Activated CD4-positive, alpha-beta memory T cell treated with anti-CD3 and anti-CD28 coated beads for 36 hours (primary cell): ENCODE measurements at regions of chr15 and their contacts with region 1.

Region 1: DNA sequence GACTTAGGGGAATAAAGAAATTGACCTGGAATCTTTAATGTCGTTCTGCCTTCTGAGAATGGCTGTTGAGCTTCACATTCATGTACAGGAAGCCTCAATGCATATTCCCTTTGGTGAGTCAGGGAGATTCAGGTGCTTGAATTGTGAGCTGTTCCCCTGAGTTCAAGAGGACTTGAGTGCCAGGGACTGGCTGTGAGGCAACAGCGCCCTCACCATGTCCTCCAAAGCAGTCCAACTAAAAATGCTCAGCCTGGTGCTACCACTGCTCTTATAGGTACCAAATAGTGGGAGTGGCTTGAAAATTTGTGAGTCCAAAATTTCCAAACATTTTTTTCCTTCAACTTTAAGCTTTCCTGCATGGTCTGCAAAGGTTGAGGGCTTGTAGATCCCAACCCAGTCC is 54.1 kb downstream of the LEO1 start:
- DNase-seq: peak; percentile 25
- H3K4me3 Mint-ChIP-seq: no peak overlapping the region
- H3K27ac Mint-ChIP-seq: no peak overlapping the region
- H3K4me1 Mint-ChIP-seq: no peaks in the 10 kb centered on the region
- H3K27me3 Mint-ChIP-seq: no peaks in the 10 kb centered on the region

Region 2: GRCh38 chr15:51793521-51794305 is 123.8 kb before region 1 on chr15:
- CTCF ChIA-PET with region 1: no interaction called
- POLR2A ChIA-PET with region 1: no interaction called
- intact Hi-C with region 1: loop called (anchors 10 kb)
- DNase-seq: no peak
- H3K4me3 Mint-ChIP-seq: no peak overlapping the region
- H3K27ac Mint-ChIP-seq: no peak overlapping the region
- H3K4me1 Mint-ChIP-seq: no peaks in the 10 kb centered on the region
- H3K27me3 Mint-ChIP-seq: no peaks in the 10 kb centered on the region

Region 3: DNA sequence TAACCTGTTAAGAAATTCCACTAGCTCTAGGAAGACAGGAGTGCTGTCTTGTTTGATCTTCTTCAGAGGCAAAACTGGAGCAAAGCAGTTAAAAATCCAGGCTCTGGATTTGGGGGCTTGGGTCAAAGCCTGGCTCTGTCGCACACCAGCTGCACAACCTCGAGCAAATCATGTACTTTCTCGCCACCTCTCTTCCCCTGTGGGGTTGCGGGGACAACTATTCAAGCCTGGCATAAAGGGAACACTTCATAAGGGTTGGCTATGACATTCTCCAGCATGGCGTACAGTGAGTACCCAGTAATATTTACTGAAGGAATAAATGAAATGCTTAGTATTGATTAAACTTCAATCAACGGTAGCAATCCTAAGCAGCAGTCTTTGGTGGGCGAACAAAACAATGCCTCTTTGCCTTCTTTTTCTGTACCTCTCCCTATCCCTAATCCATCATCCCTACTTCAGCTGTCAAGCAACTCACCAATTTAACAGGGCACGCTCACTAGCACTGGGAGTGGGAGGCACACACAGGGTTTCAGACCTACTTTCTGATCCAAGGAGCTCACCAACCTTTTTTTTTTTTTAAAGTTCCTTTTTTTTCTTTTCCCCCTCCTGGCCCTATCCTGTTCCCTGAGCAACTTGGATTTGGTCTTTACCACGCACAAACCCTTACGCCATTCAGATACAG is 240.7 kb after region 1 on chr15:
- CTCF ChIA-PET with region 1: no interaction called
- POLR2A ChIA-PET with region 1: no interaction called
- intact Hi-C with region 1: no loop called
- DNase-seq: no peak
- H3K4me3 Mint-ChIP-seq: no peak overlapping the region
- H3K27ac Mint-ChIP-seq: no peak overlapping the region
- H3K4me1 Mint-ChIP-seq: no peaks in the 10 kb centered on the region
- H3K27me3 Mint-ChIP-seq: no peaks in the 10 kb centered on the region

Region 4: DNA sequence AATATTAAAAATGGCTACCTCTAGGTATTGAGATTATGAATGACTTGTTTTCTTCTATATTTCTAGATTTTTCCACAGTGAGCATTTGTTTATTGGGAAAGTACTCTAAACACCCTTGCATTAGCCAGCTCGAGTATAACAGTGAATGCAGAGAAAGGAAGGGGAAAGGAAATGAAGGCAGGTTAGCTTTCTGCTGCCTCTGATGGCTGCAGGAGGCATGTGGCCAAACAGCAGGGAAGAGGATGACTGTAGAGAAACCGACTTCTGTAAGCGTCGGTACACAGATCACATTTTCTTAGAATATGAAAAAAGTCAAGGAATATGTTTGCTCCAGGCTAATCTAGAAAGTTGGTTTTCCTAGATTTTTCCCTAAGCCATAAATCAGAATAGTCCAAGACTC is 253.9 kb after region 1 on chr15:
- CTCF ChIA-PET with region 1: no interaction called
- POLR2A ChIA-PET with region 1: no interaction called
- intact Hi-C with region 1: no loop called
- DNase-seq: no peak
- H3K4me3 Mint-ChIP-seq: no peak overlapping the region
- H3K27ac Mint-ChIP-seq: no peak overlapping the region
- H3K4me1 Mint-ChIP-seq: peaks cover 34% of the 10 kb centered on the region
- H3K27me3 Mint-ChIP-seq: no peaks in the 10 kb centered on the region